Panc1 (cell line): ENCODE measurements at regions of chr3 and their contacts with region 1.

Region 1: DNA sequence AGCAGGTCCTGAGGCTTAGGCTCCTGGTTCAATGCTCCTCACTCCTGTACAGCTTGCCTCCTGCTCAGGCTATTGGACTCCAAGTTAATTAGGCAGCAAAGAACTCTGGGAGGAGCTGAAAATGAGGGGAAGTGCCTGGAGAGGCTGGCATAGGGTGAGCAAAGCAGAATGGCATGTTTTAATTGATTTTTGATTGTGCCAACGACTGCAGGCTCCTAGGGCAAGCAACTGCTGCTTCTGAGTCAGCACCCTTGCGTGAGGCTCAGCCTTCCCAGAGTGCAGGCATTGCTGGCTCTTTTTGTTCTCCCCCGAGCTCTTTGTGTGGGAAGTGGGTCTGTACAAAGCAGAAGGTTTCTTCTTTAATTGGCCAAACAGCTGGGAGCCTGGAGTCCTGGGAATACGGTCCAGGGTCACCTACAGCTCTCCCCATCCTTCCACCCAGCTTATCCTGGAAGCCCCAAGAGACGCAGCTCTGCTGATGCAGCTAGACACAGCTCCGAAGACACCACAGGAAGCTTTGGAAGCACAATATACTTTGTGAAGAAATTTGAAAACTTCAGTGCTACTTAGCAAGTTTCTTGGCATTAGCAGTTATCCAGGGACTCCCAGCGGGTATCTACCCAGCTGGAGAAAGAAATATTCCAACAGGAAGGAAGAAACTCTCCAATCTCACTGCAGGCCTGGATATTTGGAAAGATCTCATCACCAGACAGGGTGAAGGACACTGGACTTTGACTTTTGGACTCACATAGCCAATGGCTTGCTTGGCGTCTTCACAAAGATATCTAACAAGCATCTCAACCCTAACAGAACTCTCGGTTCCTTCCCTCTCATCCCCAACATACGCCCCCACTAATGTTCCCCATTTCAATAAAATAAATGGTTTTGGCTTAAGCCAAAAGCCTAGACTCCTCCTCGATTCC is 76.8 kb downstream of the BDH1 start:
- DNase-seq: no peak
- ATAC-seq: peak; percentile 78
- H3K4me3 ChIP-seq: no peak overlapping the region
- H3K27ac ChIP-seq: no peak overlapping the region
- H3K4me1 ChIP-seq: no peaks in the 10 kb centered on the region
- H3K27me3 ChIP-seq: no peaks in the 10 kb centered on the region
- CTCF ChIP-seq: no peak

Region 2: GRCh38 chr3:197317250-197317963 is 161.6 kb before region 1 on chr3:
- CTCF ChIA-PET with region 1: interaction called, 12 read pairs
- POLR2A ChIA-PET with region 1: no interaction called
- in situ Hi-C with region 1: no loop called
- intact Hi-C with region 1: no loop called
- DNase-seq: no peak
- ATAC-seq: no peak
- H3K4me3 ChIP-seq: no peak overlapping the region
- H3K27ac ChIP-seq: no peak overlapping the region
- H3K4me1 ChIP-seq: no peaks in the 10 kb centered on the region
- H3K27me3 ChIP-seq: peaks cover 9% of the 10 kb centered on the region; the same call in 1 of the 2 replicates
- CTCF ChIP-seq: no peak